IMR-90 (cell line): ENCODE measurements at regions of chr1 and their contacts with region 1.

Region 1: DNA sequence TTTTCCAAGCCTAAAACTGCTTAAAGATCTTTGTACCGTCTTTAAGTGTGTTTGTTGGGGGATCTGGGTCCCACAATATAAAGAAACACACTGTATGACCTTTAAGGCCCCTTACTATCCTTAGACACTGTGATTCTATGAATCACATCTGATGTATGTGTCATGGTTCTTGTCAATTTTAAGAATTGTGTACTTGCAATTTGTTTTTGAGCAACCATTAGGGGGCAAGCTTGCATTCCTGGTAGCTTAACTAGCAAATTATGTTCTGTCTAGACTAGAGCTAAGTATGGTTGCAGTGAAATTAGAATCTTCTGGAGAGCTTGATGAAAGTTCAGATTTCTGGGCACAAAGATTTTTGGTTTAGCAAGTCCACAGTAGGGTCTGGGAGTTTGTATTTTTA is 219.5 kb downstream of the TPR start:
- DNase-seq: peak; percentile 80
- ATAC-seq: peak; percentile 86
- H3K4me3 ChIP-seq: no peak overlapping the region
- H3K27ac ChIP-seq: no peak overlapping the region
- H3K4me1 ChIP-seq: peaks cover 4% of the 10 kb centered on the region; the same call in 1 of the 2 replicates
- H3K27me3 ChIP-seq: no peaks in the 10 kb centered on the region
- CTCF ChIP-seq: peak; percentile 74
- POLR2A ChIP-seq: no peak
- RAD21 ChIP-seq: peak; percentile 73

Region 2: DNA sequence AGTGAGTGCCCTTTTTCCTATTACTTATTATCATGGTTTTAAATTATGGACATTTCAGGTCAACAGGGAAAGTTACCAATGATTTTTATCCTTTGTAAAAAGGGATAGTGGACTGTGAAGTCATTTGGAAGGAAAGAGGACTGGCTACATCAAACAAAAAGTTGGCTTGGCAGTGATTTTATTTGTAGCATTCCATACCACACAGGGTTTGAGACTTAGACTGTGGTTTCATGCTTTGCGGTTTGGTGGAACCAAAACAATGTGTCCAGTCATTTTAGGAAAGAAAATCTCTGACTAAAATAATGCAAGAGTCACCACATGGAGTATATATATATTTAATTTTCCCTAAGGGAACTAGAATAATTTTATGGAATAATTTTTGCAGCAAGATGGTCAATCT is 181.9 kb before region 1 on chr1:
- CTCF ChIA-PET with region 1: interaction called, 4 read pairs
- POLR2A ChIA-PET with region 1: no interaction called
- dilution Hi-C with region 1: no loop called
- in situ Hi-C with region 1: no loop called
- intact Hi-C with region 1: loop called (anchors 5 kb)
- DNase-seq: peak; percentile 96
- ATAC-seq: peak; percentile 76
- H3K4me3 ChIP-seq: no peak overlapping the region
- H3K27ac ChIP-seq: peak overlapping the region; percentile 40; the same call in 1 of the 2 replicates
- H3K4me1 ChIP-seq: peaks cover 17% of the 10 kb centered on the region
- H3K27me3 ChIP-seq: no peaks in the 10 kb centered on the region
- CTCF ChIP-seq: no peak
- POLR2A ChIP-seq: no peak
- RAD21 ChIP-seq: no peak

Region 3: DNA sequence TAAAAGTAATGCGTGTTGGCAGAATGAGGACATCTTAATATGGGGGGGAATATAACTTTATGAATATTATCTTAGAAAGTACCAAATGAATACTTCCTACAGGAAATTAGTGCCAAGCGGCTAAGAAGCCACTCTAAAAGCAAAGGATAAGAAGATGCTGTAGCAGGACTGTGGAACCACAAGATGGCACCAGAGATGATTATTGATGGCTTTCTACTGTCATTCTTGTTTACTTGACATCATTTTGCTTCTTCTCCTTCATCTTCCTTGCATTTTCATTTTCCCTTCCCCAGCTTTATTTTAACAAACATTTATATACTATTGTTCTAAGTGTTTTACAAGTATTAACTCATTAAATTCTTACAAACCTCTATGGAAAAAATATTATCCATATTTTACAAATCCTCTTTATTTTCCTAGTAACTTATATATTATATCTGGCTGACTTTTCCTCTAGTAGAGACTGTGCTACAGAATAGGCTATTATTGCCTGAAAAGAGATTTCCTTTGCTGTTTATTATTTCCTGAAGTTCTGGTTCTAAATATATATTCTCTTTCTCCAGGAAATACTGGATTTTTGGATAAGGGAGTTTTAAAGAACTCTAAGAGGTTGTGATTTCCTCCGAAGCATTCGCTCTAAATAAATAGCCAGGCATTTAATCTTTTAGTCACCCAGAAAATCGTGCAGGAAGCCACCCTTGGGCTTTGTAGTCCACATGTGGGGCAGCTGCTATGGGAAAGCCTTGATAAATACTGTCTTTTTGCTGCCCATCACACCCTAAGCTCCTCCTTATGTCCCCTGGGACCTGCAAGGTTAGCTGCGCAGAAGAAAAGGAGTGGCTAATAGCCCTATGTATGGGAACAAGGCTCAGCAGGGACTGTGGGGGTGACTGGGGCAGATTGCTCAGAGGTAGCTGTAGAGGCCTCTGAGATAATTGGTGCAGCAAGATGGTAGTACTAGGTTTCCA is 149.7 kb after region 1 on chr1:
- CTCF ChIA-PET with region 1: no interaction called
- POLR2A ChIA-PET with region 1: no interaction called
- dilution Hi-C with region 1: no loop called
- in situ Hi-C with region 1: no loop called
- intact Hi-C with region 1: loop called (anchors 10 kb)
- DNase-seq: peak; percentile 13
- ATAC-seq: peak; percentile 48; the same call in 1 of the 2 replicates
- H3K4me3 ChIP-seq: no peak overlapping the region
- H3K27ac ChIP-seq: no peak overlapping the region
- H3K4me1 ChIP-seq: no peaks in the 10 kb centered on the region
- H3K27me3 ChIP-seq: no peaks in the 10 kb centered on the region
- CTCF ChIP-seq: peak; percentile 42
- POLR2A ChIP-seq: no peak
- RAD21 ChIP-seq: no peak